ENCODE measurements at regions of chr10 and their contacts with region 1.

Region 1: GRCh38 chr10:35126530-35127296 is at the start of gene CREM:
- DNase-seq: peak; percentile 92 to 99 (median 98)
- ATAC-seq: peak; percentile 96
- H3K4me3 ChIP-seq: peak within 1 kb of the TSS; percentile 58 to 77
- H3K27ac ChIP-seq: peak within 1 kb of the TSS; percentile 100
- H3K4me1 ChIP-seq: peaks cover 5 to 26% of the 10 kb centered on the region in 2 donors
- H3K27me3 ChIP-seq: no peaks in the 10 kb centered on the region
- CTCF ChIP-seq: peak; percentile 72 to 92
- polyA plus RNA-seq, gene CREM: 33.8 to 43.5 (median 37.3) TPM

Region 2: GRCh38 chr10:34696423-34696822 is 430.3 kb before region 1 on chr10:
- intact Hi-C with region 1: no loop called
- DNase-seq: no peak
- ATAC-seq: peak; percentile 62
- H3K4me3 ChIP-seq: no peak overlapping the region
- H3K27ac ChIP-seq: no peak overlapping the region
- H3K4me1 ChIP-seq: peaks cover 5 to 14% of the 10 kb centered on the region in 2 donors
- H3K27me3 ChIP-seq: no peaks in the 10 kb centered on the region
- CTCF ChIP-seq: no peak

Region 3: DNA sequence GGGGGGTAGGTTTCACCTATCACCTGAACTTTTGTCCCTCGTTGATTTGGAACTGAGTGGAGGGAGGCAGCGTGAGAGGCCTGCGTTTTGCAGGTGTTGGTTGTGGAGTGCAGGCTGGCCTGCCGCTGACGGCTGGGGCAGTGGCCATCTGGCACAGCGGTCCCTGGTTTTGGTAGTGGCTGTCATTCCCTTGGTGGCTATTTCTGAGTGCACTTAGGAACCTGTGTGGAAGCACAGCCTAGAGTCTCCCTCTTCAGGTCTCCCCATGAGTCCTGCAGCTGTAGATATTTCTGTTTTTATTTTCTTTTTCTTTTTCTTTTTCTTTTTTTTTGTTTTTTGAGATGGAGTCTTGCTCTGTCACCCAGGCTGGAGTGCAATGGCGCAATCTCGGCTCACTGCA is 165.7 kb before region 1 on chr10:
- intact Hi-C with region 1: no loop called
- DNase-seq: no peak
- ATAC-seq: peak; percentile 73
- H3K4me3 ChIP-seq: no peak overlapping the region
- H3K27ac ChIP-seq: no peak overlapping the region
- H3K4me1 ChIP-seq: no peaks in the 10 kb centered on the region
- H3K27me3 ChIP-seq: no peaks in the 10 kb centered on the region
- CTCF ChIP-seq: no peak

Region 4: DNA sequence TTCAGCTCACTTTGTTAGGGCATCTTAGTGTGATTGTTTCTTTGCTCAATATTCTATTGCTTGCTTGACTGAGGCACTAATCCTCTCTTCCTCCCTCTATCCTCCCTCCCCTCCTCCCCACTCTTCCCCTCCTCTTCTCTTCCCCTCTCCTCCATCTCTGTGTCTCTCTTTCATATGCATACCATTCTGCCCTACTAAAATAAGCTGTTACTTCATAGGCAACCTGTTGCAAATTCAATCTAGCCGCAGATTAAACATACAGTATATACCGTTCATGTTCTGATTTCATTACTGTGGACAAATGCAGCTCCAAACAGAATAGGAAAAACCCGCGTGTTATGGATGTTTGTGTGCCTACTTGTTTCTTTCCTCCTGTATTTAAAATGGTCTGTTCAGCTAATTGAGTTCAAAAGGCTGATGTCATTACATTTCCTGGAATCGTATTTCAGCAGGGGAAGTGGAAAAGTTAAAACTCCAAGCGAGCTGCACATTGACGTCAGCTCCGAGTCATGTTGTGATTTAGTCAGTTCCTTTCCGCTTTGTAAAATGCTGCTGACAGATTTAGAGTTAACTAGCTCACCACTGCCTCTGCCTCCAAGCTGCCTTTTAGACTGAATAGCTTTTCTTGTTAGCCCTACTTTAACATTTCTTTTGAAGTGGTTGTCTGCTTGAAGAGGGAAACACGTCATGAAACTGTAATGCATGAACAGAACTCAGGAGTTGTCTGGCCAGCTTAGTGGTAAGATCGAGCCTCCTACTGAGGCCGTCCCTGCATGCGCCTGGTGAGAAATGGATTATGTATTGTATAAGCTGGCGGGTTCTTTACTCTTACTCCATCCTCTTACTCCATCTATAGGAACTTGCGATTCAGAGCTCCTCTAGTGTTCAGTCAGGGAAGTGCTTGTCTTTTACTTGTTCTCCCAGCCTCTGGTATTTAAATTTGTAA is 68.9 kb after region 1 on chr10:
- intact Hi-C with region 1: loop called in 1 of 2 experiments (anchors 5 kb)
- DNase-seq: peak in 3 of 4 donors; percentile 82 to 96 (median 89)
- ATAC-seq: peak; percentile 92
- H3K4me3 ChIP-seq: peak overlapping the region; percentile 33
- H3K27ac ChIP-seq: peak overlapping the region; percentile 92 to 99
- H3K4me1 ChIP-seq: peaks cover 10 to 46% of the 10 kb centered on the region in 2 donors
- H3K27me3 ChIP-seq: no peaks in the 10 kb centered on the region
- CTCF ChIP-seq: peak; percentile 83 to 84

Region 5: GRCh38 chr10:35218339-35218955 is 91.7 kb after region 1 on chr10:
- intact Hi-C with region 1: loop called in 1 of 2 experiments (anchors 5 kb)
- DNase-seq: peak in 3 of 4 donors; percentile 78 to 90 (median 80)
- ATAC-seq: peak; percentile 91
- H3K4me3 ChIP-seq: no peak overlapping the region
- H3K27ac ChIP-seq: peak overlapping the region in 1 of 2 donors; percentile 48
- H3K4me1 ChIP-seq: peaks cover 12 to 30% of the 10 kb centered on the region in 2 donors
- H3K27me3 ChIP-seq: no peaks in the 10 kb centered on the region
- CTCF ChIP-seq: peak; percentile 68 to 80

Measured in left lung (tissue), 14 donors.